ENCODE measurements at regions of chr2 and their contacts with region 1.

Region 1: DNA sequence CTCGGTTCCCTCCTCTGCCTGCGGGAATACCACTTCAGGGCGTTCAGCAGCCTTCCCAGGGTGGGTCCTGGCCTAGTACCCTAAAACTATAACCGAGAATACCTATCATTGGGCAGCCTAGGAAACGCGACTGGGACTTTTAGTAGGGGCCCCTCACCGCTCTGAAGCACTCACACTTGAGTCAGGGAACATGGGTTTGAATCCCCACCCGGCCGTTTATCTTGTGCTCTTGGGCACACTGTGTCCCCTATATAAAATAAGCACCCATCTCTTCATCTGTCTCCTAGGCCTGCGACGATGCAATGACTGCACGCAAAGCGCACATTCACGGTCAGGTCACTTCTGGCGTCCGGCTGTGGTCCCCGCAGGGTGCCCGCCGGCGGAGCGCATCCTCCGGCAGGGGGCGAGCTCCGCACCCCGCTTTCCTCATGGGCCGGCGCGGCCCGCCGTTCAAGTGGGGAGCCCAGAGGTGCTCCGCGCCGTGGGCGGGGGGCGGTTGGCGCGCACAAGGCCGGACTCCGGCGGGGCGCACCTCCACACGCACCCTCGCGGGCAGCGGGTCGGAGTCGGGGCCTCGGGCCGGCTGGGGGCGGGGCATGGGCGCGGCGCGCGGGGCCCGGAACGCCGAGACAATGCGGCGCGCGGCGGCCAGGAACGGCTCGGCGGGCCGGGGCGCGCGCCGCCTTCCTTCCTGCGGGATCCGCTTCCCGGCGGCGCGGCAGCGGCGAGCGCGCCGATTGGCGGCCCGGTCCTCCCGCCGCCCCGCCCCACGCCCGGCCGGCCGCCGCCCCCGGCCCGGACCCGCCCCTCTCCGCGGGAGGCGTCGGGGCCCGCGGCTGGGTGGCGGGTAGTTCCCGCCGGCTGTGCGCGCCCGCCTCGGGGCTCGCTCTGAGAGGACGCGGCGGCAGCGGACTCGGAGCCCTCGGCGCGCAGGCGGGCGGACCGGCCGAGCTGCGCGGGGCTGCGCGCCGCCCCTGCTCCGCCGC is at the start of gene ASAP2:
- DNase-seq: peak; percentile 89
- H3K4me3 ChIP-seq: peak within 1 kb of the TSS; percentile 92
- H3K27ac ChIP-seq: peak within 1 kb of the TSS; percentile 77
- H3K4me1 ChIP-seq: peaks cover 31% of the 10 kb centered on the region
- H3K27me3 ChIP-seq: no peaks in the 10 kb centered on the region
- total RNA-seq, gene ASAP2: 49.6 and 54.1 TPM in 2 replicates

Region 2: DNA sequence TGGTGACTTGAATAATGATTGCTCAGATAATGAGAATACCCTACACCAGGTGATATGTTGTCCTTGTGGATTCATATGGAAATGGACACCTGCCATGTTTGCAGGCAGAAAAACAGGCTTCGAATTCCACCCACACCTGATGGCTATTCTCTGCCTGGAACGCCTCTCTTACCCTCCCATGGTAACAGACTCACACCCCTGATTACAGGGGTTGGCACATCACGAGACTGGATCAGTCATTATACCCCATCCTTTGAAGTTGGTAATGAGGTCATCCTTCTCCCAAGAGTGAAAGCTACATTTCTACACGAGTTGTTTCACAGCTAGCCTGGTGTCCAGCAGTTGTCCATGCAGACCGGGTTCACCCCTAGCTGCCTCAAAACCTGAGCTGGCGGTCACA is 131.3 kb before region 1 on chr2:
- in situ Hi-C with region 1: no loop called
- DNase-seq: no peak
- H3K4me3 ChIP-seq: no peak overlapping the region
- H3K27ac ChIP-seq: no peak overlapping the region
- H3K4me1 ChIP-seq: peaks cover 15% of the 10 kb centered on the region
- H3K27me3 ChIP-seq: no peaks in the 10 kb centered on the region

Region 3: GRCh38 chr2:9333591-9334171 is 127.4 kb after region 1 on chr2:
- in situ Hi-C with region 1: loop called (anchors 10 kb)
- DNase-seq: peak; percentile 92
- H3K4me3 ChIP-seq: no peak overlapping the region
- H3K27ac ChIP-seq: peak overlapping the region; percentile 30
- H3K4me1 ChIP-seq: peaks cover 15% of the 10 kb centered on the region
- H3K27me3 ChIP-seq: no peaks in the 10 kb centered on the region

Measured in GM23248 (cell line).